Mammary epithelial cell (primary cell): ENCODE measurements at regions of chr10 and their contacts with region 1.

Region 1: GRCh38 chr10:26481914-26482550 is 43.9 kb downstream of the APBB1IP start:
- DNase-seq: no peak
- H3K4me3 ChIP-seq: no peak overlapping the region
- H3K27ac ChIP-seq: no peak overlapping the region
- H3K4me1 ChIP-seq: no peaks in the 10 kb centered on the region
- H3K27me3 ChIP-seq: no peaks in the 10 kb centered on the region
- CTCF ChIP-seq: no peak

Region 2: GRCh38 chr10:26441491-26442214 is 40.4 kb before region 1 on chr10:
- CTCF ChIA-PET with region 1: no interaction called
- dilution Hi-C with region 1: loop called (anchors 5 kb)
- in situ Hi-C with region 1: no loop called
- intact Hi-C with region 1: no loop called
- DNase-seq: no peak
- H3K4me3 ChIP-seq: no peak overlapping the region
- H3K27ac ChIP-seq: no peak overlapping the region
- H3K4me1 ChIP-seq: no peaks in the 10 kb centered on the region
- H3K27me3 ChIP-seq: no peaks in the 10 kb centered on the region
- CTCF ChIP-seq: no peak